ENCODE measurements at regions of chr2 and their contacts with region 1.

Region 1: DNA sequence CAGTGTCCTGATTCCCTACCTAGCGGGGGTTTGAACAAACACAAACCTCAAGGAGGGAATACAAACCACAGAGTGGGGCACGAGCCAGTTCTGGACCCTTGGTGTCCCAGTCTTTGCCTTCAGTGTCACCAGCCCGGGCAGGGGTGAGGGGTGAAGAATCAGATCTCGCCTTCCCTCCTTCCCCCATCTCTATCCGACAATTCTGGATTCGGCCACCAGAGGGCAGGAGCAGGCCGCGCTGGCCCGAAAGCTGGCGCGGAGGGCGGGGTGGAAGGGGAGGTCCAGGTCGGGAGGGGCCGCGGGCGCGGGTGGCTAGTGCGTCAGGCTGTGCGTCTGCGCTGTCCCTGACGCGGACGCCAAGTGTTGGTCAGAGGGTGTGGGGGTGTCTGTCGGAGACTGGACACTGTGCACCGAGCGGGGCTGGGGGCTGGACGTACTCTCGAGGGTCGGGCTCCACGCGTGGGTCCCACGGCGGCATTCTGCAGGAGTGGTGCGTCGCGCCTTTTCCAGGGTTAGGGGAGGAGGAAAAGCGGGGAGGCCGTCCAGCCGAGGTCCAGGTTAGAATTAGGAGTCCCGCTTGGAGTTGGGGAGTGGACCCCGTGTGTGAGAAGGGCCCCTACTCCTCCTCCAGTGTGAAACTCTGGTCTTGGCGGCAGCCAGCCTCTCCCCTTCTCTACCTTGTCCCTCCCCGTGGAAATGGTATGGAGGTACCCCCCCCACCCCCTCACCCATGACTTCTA is 2.9 kb upstream of the CRYBA2 start:
- DNase-seq: peak; percentile 74
- H3K4me3 Mint-ChIP-seq: no peak overlapping the region
- H3K27ac Mint-ChIP-seq: no peak overlapping the region
- H3K4me1 Mint-ChIP-seq: peaks cover 2% of the 10 kb centered on the region
- H3K27me3 Mint-ChIP-seq: peaks cover 81% of the 10 kb centered on the region

Region 2: DNA sequence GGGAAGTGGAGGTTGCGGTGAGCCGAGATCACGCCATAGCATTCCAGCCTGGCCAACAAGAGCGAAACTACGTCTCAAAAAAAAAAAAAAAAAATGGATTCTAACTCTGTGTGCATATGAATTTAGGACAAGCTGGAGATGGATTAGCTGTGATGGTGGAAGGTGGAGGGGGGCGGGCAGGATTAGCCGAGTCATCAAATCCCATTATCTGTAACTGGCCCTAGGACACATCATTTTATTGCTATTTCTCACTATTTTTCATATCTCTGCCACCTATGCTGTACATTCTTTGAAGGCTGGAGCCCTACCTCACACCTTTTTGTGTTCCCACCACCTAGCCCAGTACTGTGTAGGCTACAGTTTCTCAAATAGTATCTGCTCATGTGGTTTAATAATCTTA is 44.0 kb before region 1 on chr2:
- CTCF ChIA-PET with region 1: no interaction called
- POLR2A ChIA-PET with region 1: no interaction called
- DNase-seq: no peak
- H3K4me3 Mint-ChIP-seq: no peak overlapping the region
- H3K27ac Mint-ChIP-seq: no peak overlapping the region
- H3K4me1 Mint-ChIP-seq: no peaks in the 10 kb centered on the region
- H3K27me3 Mint-ChIP-seq: peaks cover 29% of the 10 kb centered on the region

Region 3: GRCh38 chr2:218979846-218980734 is 16.1 kb before region 1 on chr2:
- CTCF ChIA-PET with region 1: interaction called, 18 read pairs
- POLR2A ChIA-PET with region 1: no interaction called
- DNase-seq: peak; percentile 82
- H3K4me3 Mint-ChIP-seq: no peak overlapping the region
- H3K27ac Mint-ChIP-seq: peak overlapping the region; percentile 36
- H3K4me1 Mint-ChIP-seq: peaks cover 18% of the 10 kb centered on the region
- H3K27me3 Mint-ChIP-seq: peaks cover 75% of the 10 kb centered on the region

Region 4: GRCh38 chr2:219017201-219017931 is 21.2 kb after region 1 on chr2:
- CTCF ChIA-PET with region 1: no interaction called
- POLR2A ChIA-PET with region 1: no interaction called
- DNase-seq: no peak
- H3K4me3 Mint-ChIP-seq: no peak overlapping the region
- H3K27ac Mint-ChIP-seq: no peak overlapping the region
- H3K4me1 Mint-ChIP-seq: no peaks in the 10 kb centered on the region
- H3K27me3 Mint-ChIP-seq: peaks cover 10% of the 10 kb centered on the region